ENCODE measurements at regions of chr9 and their contacts with region 1.

Region 1: DNA sequence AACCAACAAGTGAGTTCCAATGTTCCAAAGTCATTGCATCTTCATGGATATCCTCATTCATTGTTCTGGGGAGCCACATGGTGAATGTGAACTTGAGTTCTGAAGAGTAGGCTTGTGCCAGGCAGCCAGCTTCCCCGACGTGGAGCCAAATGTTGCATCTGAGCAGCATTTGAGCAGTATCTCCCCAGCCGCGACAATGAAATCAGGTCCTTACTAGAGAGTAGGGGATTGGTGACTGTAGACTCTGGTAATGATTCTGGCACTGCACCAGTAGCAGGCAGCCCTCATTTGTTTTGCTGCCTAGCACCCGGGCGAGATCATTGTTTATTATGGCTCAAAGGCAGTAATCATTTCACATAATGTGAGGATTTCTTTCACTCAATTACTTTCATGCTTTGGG is 451.4 kb upstream of the C9orf72 start:
- DNase-seq: no peak
- ATAC-seq: no peak
- H3K4me3 ChIP-seq: no peak overlapping the region
- H3K27ac ChIP-seq: no peak overlapping the region
- H3K4me1 ChIP-seq: no peaks in the 10 kb centered on the region
- H3K27me3 ChIP-seq: no peaks in the 10 kb centered on the region
- CTCF ChIP-seq: no peak
- POLR2A ChIP-seq: no peak

Region 2: GRCh38 chr9:27505744-27506161 is 518.9 kb before region 1 on chr9:
- in situ Hi-C with region 1: no loop called
- intact Hi-C with region 1: no loop called
- DNase-seq: no peak
- ATAC-seq: no peak
- H3K4me3 ChIP-seq: no peak overlapping the region
- H3K27ac ChIP-seq: no peak overlapping the region
- H3K4me1 ChIP-seq: no peaks in the 10 kb centered on the region
- H3K27me3 ChIP-seq: no peaks in the 10 kb centered on the region
- CTCF ChIP-seq: no peak
- POLR2A ChIP-seq: no peak

Region 3: DNA sequence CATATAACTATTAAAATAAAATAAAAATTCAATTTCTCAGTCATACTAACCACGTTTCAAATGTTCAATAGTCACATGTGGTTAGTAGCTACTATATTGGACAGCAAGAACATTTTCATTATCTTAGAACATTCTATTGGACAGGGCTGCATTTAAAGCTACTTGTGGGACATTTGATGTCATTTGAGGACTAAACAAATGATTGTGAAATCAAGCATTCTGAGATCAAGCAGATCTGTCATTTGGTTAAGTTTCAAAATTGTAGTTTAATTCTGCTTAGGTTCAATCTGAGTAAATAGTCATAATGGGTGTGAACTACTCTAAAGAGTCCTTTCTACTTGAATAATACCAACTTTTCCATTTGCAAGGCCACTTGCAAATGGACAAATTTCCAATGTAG is 224.5 kb before region 1 on chr9:
- in situ Hi-C with region 1: loop called in 1 of 4 experiments (anchors 25 kb)
- intact Hi-C with region 1: no loop called
- DNase-seq: no peak
- ATAC-seq: no peak
- H3K4me3 ChIP-seq: no peak overlapping the region
- H3K27ac ChIP-seq: no peak overlapping the region
- H3K4me1 ChIP-seq: no peaks in the 10 kb centered on the region
- H3K27me3 ChIP-seq: no peaks in the 10 kb centered on the region
- CTCF ChIP-seq: no peak
- POLR2A ChIP-seq: no peak

Region 4: DNA sequence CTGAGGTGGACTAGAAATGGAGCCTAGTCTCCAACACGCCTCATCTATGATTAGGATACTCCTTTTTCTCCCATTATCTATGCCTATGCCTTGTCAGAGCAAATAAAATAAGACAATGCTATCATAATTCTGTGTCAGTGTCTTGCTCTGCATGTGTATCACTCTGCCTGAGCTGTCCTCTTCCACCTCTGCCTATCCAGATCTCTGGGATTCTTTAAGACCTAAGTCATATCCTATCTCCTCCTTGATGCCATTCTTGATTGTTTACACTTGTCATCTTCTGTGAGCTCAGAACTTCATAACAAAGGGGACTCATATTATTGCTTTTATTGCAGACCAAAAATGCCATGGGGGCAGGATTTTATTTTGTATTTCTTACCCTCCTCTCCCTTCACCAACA is 100.2 kb before region 1 on chr9:
- in situ Hi-C with region 1: loop called in 1 of 4 experiments (anchors 25 kb)
- intact Hi-C with region 1: no loop called
- DNase-seq: no peak
- ATAC-seq: no peak
- H3K4me3 ChIP-seq: no peak overlapping the region
- H3K27ac ChIP-seq: no peak overlapping the region
- H3K4me1 ChIP-seq: no peaks in the 10 kb centered on the region
- H3K27me3 ChIP-seq: no peaks in the 10 kb centered on the region
- CTCF ChIP-seq: no peak
- POLR2A ChIP-seq: no peak

Region 5: GRCh38 chr9:27945388-27945787 is 79.3 kb before region 1 on chr9:
- in situ Hi-C with region 1: no loop called
- intact Hi-C with region 1: no loop called
- DNase-seq: no peak
- ATAC-seq: no peak
- H3K4me3 ChIP-seq: no peak overlapping the region
- H3K27ac ChIP-seq: no peak overlapping the region
- H3K4me1 ChIP-seq: no peaks in the 10 kb centered on the region
- H3K27me3 ChIP-seq: no peaks in the 10 kb centered on the region
- CTCF ChIP-seq: no peak
- POLR2A ChIP-seq: no peak

Region 6: GRCh38 chr9:28301281-28301680 is 276.6 kb after region 1 on chr9:
- in situ Hi-C with region 1: no loop called
- intact Hi-C with region 1: no loop called
- DNase-seq: no peak
- ATAC-seq: no peak
- H3K4me3 ChIP-seq: no peak overlapping the region
- H3K27ac ChIP-seq: no peak overlapping the region
- H3K4me1 ChIP-seq: no peaks in the 10 kb centered on the region
- H3K27me3 ChIP-seq: no peaks in the 10 kb centered on the region
- CTCF ChIP-seq: no peak
- POLR2A ChIP-seq: no peak

Measured in gastrocnemius medialis (tissue), 4 donors.